Activated CD4-positive, alpha-beta T cell treated with anti-CD3 and anti-CD28 coated beads, Interleukin-2, amount 10 ng/mL, durations not matched to agents 24 days and 14 days (primary cell): ENCODE measurements at regions of chr6 and their contacts with region 1.

Region 1: GRCh38 chr6:71012866-71013469 is 56.1 kb upstream of the B3GAT2 start:
- DNase-seq: peak; percentile 75
- H3K4me3 Mint-ChIP-seq: no peak overlapping the region
- H3K27ac Mint-ChIP-seq: no peak overlapping the region
- H3K4me1 Mint-ChIP-seq: no peaks in the 10 kb centered on the region
- H3K27me3 Mint-ChIP-seq: peaks cover 10% of the 10 kb centered on the region

Region 2: DNA sequence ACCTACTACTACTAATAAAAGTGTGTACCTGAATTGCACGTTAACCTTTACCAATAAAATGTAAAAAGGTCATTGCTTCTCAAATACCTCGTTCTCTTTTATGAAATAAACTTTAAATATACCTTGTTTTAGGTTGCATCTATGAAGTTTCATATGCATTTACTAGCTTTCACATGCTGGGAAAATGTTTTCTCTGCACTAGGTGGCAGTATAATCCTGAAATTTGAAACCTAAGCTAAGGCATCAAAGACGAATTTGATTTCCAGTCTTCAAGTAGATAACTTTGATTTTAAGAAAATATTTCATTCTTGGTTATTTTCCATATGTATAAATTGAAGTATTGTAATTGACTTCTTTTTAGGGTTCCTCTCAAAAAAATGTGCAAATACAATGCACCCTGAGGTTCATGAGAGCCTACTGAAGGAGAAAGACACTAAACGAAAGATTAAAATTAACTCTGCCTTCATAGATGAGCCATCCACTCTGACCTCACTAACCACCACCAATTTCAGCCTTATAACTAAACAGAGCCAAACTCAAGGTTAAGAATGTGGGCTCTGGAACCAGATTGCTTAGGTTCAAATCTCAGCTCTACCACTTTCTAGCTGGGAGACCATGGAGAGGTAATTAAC is 702.8 kb before region 1 on chr6:
- intact Hi-C with region 1: loop called (anchors 2 kb)
- DNase-seq: peak; percentile 63
- H3K4me3 Mint-ChIP-seq: no peak overlapping the region
- H3K27ac Mint-ChIP-seq: no peak overlapping the region
- H3K4me1 Mint-ChIP-seq: no peaks in the 10 kb centered on the region
- H3K27me3 Mint-ChIP-seq: peaks cover 20% of the 10 kb centered on the region

Region 3: DNA sequence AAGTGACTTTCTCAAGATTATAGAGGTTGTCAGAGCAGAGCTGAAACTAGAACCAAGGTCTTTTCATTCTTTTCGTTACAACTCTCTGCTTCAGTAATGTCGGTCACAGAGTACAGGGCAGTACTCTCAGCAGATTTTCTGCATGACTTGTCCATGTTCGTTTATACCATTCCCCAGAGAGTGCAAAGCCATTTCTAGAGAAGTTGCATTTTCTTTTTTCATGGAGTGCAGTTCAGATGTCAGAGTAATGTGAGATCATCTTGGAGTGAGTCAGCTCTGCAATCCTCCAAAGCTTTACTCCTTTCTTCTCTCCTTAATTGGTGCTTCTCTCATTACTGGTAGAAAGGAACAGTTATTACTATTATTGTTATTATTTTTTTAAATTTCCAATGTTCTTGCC is 59.5 kb after region 1 on chr6:
- intact Hi-C with region 1: no loop called
- DNase-seq: no peak
- H3K4me3 Mint-ChIP-seq: no peak overlapping the region
- H3K27ac Mint-ChIP-seq: no peak overlapping the region
- H3K4me1 Mint-ChIP-seq: no peaks in the 10 kb centered on the region
- H3K27me3 Mint-ChIP-seq: no peaks in the 10 kb centered on the region